OCI-LY7 (cell line): ENCODE measurements at regions of chr22 and their contacts with region 1.

Region 1: GRCh38 chr22:21612865-21613265 is 17.0 kb downstream of the YDJC start:
- DNase-seq: no peak
- H3K4me3 ChIP-seq: no peak overlapping the region
- H3K27ac ChIP-seq: no peak overlapping the region
- H3K4me1 ChIP-seq: peaks cover 42% of the 10 kb centered on the region
- CTCF ChIP-seq: no peak

Region 2: GRCh38 chr22:20211997-20212753 is 1400.7 kb before region 1 on chr22:
- CTCF ChIA-PET with region 1: no interaction called
- POLR2A ChIA-PET with region 1: no interaction called
- intact Hi-C with region 1: loop called (anchors 10 kb)
- DNase-seq: no peak
- H3K4me3 ChIP-seq: no peak overlapping the region
- H3K27ac ChIP-seq: no peak overlapping the region
- H3K4me1 ChIP-seq: peaks cover 1% of the 10 kb centered on the region
- CTCF ChIP-seq: no peak

Region 3: GRCh38 chr22:21652010-21652546 is 39.2 kb after region 1 on chr22:
- CTCF ChIA-PET with region 1: no interaction called
- POLR2A ChIA-PET with region 1: no interaction called
- intact Hi-C with region 1: no loop called
- DNase-seq: peak; percentile 94
- H3K4me3 ChIP-seq: peak overlapping the region; percentile 76
- H3K27ac ChIP-seq: peak overlapping the region; percentile 68
- H3K4me1 ChIP-seq: peaks cover 32% of the 10 kb centered on the region
- CTCF ChIP-seq: no peak

Region 4: DNA sequence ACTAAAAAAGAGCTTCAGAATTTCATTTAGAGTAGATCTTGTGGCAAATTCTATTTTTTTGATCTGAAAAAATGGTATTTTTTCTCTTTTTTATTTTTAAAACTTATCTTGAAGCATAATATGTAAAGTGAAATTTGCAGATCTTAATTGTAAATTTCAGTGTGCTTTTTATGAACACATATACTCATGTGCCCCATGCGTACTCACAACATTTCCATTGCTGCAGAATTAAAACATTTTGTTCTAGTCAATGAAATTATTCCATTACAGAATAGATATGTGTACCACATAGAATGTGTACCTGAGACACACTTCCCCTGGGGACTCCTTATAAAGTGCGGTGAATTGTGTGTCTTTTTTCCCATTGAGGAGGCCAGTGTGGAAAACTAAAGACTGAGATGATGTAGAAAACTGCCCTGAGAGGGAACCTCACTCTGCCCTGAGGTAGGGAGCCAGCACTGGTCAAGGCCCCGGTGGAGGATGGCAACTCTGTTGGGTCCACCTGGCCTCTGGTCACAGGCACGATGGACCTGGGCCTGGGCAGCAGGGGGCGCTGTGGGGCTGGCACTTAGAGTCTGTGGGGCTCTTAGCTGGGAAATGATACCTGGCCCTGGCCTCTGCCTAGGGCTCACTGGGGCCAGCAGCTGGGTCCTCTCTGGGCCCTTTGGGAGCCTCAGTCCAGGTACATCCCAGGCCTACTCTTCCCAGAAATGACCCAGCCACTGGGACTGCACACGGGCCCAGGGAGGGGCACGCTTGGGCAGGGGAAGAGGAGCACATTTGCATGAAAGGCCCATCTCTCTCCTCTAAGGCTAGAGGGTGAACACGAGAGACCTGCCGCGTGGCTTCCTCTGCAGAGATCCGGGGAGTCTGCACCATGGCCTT is 447.6 kb after region 1 on chr22:
- CTCF ChIA-PET with region 1: no interaction called
- POLR2A ChIA-PET with region 1: no interaction called
- intact Hi-C with region 1: no loop called
- DNase-seq: peak; percentile 84
- H3K4me3 ChIP-seq: no peak overlapping the region
- H3K27ac ChIP-seq: peak overlapping the region; percentile 50
- H3K4me1 ChIP-seq: peaks cover 60% of the 10 kb centered on the region
- CTCF ChIP-seq: peak; percentile 99